ENCODE measurements at regions of chr13 and their contacts with region 1.

Region 1: DNA sequence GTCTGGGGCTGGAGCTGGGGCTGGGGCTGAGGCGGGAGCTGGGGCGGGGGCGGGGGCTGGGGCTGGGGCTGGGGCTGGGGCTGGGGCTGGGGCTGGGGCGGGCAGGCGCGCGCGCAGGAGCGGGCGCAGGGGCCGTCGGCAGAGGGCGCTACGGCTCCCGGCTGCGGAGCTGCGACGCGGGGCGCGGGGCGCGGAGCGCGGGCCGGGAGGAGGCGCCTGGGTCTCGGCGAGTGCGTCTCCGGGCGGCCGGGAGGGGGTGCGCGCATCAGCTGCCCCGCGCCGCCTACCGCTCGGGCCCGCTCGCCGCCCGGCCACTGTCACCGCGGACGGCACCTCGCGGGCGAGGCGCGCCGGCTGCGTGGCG is 422 bp upstream of the MTUS2 start:
- DNase-seq: peak; percentile 9
- ATAC-seq: peak; percentile 96
- H3K4me3 ChIP-seq: peak overlapping the region in 1 of 3 experiments; percentile 52; a peak in 1 of 6 replicates
- H3K27ac ChIP-seq: no peak overlapping the region
- H3K4me1 ChIP-seq: no peaks in the 10 kb centered on the region
- H3K27me3 ChIP-seq: peaks cover 0 to 9% of the 10 kb centered on the region in 2 experiments; a peak in 2 of 5 replicates
- CTCF ChIP-seq: peak; percentile 26; the same call in 1 of the 2 replicates
- EP300 ChIP-seq: no peak
- POLR2A ChIP-seq: no peak
- RAD21 ChIP-seq: peak; percentile 57; the same call in 1 of the 2 replicates

Region 2: DNA sequence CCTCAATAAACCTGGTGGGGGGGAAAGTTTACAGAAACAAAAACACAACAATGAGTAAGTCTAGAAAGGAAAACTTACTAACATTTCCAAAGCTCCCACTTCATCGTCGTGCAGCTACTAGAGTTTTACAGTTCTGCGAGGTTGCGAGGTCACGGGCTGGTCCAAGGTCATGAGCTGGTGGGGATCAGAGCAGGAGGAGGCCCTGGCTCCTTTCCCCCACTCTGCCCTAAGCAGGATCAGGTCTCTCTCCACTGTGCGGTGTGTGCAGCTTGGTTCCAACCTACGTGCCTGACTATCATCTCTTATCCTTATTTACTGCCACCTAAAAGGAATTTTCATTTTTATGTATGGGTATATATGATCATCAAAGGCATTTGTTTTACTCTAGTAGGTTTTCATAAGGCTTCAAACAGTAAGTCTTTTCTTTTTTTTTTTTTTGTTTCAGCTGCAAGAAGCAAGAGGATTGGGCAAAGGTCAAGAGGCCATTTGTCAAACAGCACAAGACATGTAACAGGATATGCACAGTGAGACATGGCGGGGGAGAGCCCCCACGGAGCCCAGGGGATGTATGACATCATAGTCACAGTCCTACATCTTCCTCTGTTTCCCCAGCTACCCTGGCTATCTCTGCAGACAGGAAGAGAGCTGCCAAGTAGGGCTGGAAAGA is 237.4 kb before region 1 on chr13:
- CTCF ChIA-PET with region 1: no interaction called
- POLR2A ChIA-PET with region 1: no interaction called
- in situ Hi-C with region 1: no loop called
- intact Hi-C with region 1: no loop called
- DNase-seq: no peak
- ATAC-seq: peak; percentile 56; the same call in 2 of the 3 replicates
- H3K4me3 ChIP-seq: no peak overlapping the region
- H3K27ac ChIP-seq: no peak overlapping the region
- H3K4me1 ChIP-seq: peaks cover 9% of the 10 kb centered on the region
- H3K27me3 ChIP-seq: 0 out of 5 replicates have a peak, but pooled peaks cover 0 to 1% of the 10 kb centered on the region in 2 experiments
- CTCF ChIP-seq: no peak
- EP300 ChIP-seq: no peak
- POLR2A ChIP-seq: no peak
- RAD21 ChIP-seq: no peak

Region 3: GRCh38 chr13:29362849-29363604 is 543.3 kb after region 1 on chr13:
- CTCF ChIA-PET with region 1: interaction called, 3 read pairs
- POLR2A ChIA-PET with region 1: no interaction called
- in situ Hi-C with region 1: no loop called
- intact Hi-C with region 1: loop called (anchors 2 kb)
- DNase-seq: peak; percentile 43
- ATAC-seq: peak; percentile 99
- H3K4me3 ChIP-seq: no peak overlapping the region
- H3K27ac ChIP-seq: no peak overlapping the region
- H3K4me1 ChIP-seq: no peaks in the 10 kb centered on the region
- H3K27me3 ChIP-seq: peaks cover 0 to 17% of the 10 kb centered on the region in 2 experiments; a peak in 2 of 5 replicates
- CTCF ChIP-seq: peak; percentile 83
- EP300 ChIP-seq: no peak
- POLR2A ChIP-seq: no peak
- RAD21 ChIP-seq: no peak

Region 4: GRCh38 chr13:29379281-29379680 is 559.6 kb after region 1 on chr13:
- CTCF ChIA-PET with region 1: no interaction called
- POLR2A ChIA-PET with region 1: no interaction called
- in situ Hi-C with region 1: loop called (anchors 10 kb)
- intact Hi-C with region 1: no loop called
- DNase-seq: no peak
- ATAC-seq: peak; percentile 46; the same call in 2 of the 3 replicates
- H3K4me3 ChIP-seq: no peak overlapping the region
- H3K27ac ChIP-seq: no peak overlapping the region
- H3K4me1 ChIP-seq: no peaks in the 10 kb centered on the region
- H3K27me3 ChIP-seq: no peaks in the 10 kb centered on the region
- CTCF ChIP-seq: no peak
- EP300 ChIP-seq: no peak
- POLR2A ChIP-seq: no peak
- RAD21 ChIP-seq: no peak

Measured in HepG2 (cell line).